ENCODE measurements at regions of chr1 and their contacts with region 1.

Region 1: GRCh38 chr1:150456146-150456647 is 31.0 kb upstream of the TARS2 start:
- DNase-seq: no peak
- H3K4me3 ChIP-seq: no peak overlapping the region
- H3K27me3 ChIP-seq: no peaks in the 10 kb centered on the region
- CTCF ChIP-seq: no peak

Region 2: GRCh38 chr1:150420560-150421265 is 35.5 kb before region 1 on chr1:
- CTCF ChIA-PET with region 1: no interaction called
- POLR2A ChIA-PET with region 1: no interaction called
- DNase-seq: no peak
- H3K4me3 ChIP-seq: no peak overlapping the region
- H3K27me3 ChIP-seq: no peaks in the 10 kb centered on the region
- CTCF ChIP-seq: no peak

Region 3: DNA sequence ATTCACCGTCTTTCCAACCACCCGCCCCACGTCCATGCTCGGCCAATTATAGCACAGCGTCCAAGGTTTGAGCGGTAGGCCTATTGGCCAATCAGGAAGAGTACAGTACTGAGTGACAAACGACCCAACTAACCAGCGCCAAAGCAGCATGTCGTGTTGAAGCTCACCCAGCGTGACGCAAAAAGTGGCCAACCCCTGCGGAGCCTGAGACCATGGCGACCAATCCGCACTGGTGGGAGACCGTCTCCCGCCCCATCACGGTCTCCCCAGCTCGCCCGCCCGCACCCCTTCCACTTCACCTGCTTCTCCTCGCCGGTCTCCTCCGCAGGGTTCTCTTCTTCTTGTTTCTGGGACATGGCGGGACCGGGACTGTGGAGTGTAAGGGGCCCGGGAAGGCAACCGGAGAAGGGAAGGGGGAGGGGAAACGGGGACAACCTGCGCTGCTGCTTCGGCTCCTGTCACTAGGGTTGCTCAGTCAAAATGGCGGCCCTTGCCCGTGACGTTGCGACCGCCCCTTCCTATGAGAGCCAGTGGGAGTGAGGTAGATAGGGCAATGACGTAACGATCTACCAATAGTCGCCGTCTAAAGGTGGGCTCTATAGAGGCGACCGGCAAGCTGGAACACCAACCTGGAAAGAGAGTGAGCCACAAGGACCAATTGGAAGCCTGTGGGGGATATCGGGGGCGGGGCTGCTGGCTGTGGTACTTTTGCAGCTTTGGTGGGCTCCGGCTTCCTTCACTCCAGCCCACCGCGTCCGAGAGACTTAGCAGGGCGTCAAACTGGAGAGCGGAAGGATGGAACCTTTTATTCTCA is 173.1 kb after region 1 on chr1 and contains the start of gene ENSA:
- CTCF ChIA-PET with region 1: no interaction called
- POLR2A ChIA-PET with region 1: interaction called, 12 read pairs
- DNase-seq: peak; percentile 99
- H3K4me3 ChIP-seq: peak within 1 kb of the TSS; percentile 74
- H3K27me3 ChIP-seq: no peaks in the 10 kb centered on the region
- CTCF ChIP-seq: no peak
- polyA plus RNA-seq, gene ENSA: 35.8 and 47.2 TPM in 2 replicates

Measured in BJ (cell line).